Upper lobe of right lung (tissue), 1 donor: ENCODE measurements at regions of chr12 and their contacts with region 1.

Region 1: DNA sequence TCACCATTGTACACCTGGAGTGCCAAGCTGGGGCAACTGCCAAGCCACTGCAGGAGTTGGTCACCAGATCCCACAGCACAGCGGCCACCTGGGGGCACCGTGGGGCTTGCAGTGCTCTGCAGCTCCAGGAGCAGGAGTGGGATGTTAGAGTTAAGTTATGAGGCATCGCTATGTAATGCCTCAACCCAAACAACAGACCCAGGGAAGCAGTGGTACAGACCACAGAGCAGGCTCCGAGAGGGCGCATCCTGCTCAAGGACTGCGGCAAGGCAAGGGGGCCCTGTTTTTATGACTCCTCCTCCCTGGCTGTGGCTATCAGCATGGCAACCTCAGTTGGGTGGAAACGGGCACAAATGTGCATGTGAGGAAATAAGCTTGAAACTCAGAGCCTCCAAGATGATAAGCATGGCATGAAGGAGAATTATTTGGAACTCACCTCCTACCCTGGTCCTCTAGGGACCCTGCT is 63.1 kb downstream of the ARL6IP4 start:
- DNase-seq: peak; percentile 92
- ATAC-seq: peak; percentile 96
- H3K4me3 ChIP-seq: no peak overlapping the region
- H3K27ac ChIP-seq: no peak overlapping the region
- H3K4me1 ChIP-seq: peaks cover 14% of the 10 kb centered on the region
- H3K27me3 ChIP-seq: no peaks in the 10 kb centered on the region
- CTCF ChIP-seq: peak; percentile 65

Region 2: DNA sequence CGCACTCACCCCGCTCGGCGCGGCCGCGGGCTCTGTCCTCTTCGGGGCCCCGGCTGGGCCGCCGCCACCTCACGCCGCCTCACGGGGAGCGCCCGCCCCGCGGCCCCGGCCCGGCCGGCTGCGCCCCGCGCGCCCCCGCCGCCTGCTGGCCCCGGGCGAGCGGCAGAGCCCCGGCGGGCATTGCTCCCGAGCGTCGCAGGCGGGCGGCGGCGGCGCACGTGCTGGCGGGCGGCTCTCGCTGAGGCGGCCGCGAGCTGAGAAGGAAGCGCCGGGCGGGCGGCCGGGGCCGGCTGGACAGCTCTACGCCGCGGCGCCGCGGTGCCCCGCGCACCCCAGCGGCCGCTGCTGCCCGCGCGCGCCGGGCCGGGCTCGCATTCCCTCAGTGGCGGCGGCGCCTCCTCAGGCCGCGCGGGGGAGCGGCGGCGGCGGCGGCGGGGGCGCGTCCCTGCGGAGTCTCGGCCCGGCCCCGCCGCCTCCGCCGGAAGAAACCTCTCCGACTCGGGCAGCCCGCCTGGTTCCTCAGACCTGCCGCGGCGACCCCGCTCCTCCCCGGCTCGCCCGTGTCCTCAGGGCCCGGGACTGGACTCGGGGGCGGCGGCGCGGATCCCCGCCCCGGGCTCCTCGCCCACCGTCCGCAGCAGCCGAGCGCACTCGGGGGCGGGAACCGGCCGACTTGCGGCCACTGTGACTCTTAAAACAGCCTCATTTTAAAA is 107.3 kb after region 1 on chr12 and contains the start of gene PITPNM2:
- intact Hi-C with region 1: loop called (anchors 10 kb)
- DNase-seq: peak; percentile 85
- ATAC-seq: peak; percentile 90
- H3K4me3 ChIP-seq: peak within 1 kb of the TSS; percentile 75
- H3K27ac ChIP-seq: peak within 1 kb of the TSS; percentile 83
- H3K4me1 ChIP-seq: peaks cover 27% of the 10 kb centered on the region
- H3K27me3 ChIP-seq: no peaks in the 10 kb centered on the region
- CTCF ChIP-seq: no peak
- total RNA-seq, gene PITPNM2: 25.9 TPM